K562 (cell line): ENCODE measurements at regions of chr17 and their contacts with region 1.

Region 1: GRCh38 chr17:73657473-73658116 is 13.3 kb upstream of the SDK2 start:
- DNase-seq: peak; percentile 29 to 59 (median 37)
- ATAC-seq: peak; percentile 81
- H3K4me3 ChIP-seq: no peak overlapping the region
- H3K27ac ChIP-seq: no peak overlapping the region
- H3K4me1 ChIP-seq: no peaks in the 10 kb centered on the region
- H3K27me3 ChIP-seq: peaks cover 0 to 11% of the 10 kb centered on the region in 2 experiments; a peak in 2 of 5 replicates
- CTCF ChIP-seq: peak; percentile 48 to 69 (median 63)
- EP300 ChIP-seq: no peak
- POLR2A ChIP-seq: no peak
- RAD21 ChIP-seq: peak in 1 of 2 experiments; percentile 49; a peak in 2 of 4 replicates

Region 2: DNA sequence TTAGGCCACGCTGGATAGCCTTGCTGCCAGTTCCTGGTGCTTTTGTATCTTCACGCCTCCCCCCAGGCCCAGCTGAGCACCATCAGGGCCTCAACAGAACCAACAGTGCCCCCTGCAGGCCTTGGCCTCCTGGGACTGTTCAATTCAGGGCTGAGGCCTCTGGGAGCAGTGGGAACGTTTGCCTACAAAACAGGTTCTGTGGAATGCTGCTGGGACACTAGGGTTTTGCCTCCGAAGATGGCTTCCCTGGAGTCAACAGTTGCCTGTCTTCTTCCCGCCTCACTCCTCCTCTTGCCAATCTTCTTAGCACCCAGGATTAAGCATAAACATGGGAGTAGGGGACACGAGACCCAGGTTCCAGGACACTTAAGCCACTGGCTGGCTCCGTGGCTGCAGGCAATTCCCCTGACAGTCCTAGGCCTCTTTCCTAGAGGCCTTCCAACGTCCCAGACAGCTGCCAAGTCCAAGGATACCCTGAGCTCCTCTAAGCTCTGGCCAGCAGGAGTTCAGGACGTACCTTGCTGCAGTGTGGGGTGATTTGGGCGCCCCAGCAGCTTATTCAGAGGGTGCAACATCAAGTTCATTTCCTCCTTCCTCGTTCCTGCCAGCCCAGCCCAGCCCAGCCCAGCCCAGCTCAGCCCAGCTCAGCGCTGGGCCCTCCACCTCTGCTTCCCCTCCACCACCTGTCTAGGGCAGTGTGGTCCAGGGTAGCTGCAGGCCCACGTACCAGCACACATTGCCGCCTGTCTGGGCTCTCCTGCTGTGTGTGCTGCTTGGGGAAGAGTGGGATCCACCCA is 299.3 kb after region 1 on chr17:
- CTCF ChIA-PET with region 1: no interaction called
- POLR2A ChIA-PET with region 1: no interaction called
- in situ Hi-C with region 1: no loop called
- intact Hi-C with region 1: loop called (anchors 10 kb)
- DNase-seq: peak; percentile 64 to 75 (median 66)
- ATAC-seq: peak; percentile 94
- H3K4me3 ChIP-seq: no peak overlapping the region
- H3K27ac ChIP-seq: no peak overlapping the region
- H3K4me1 ChIP-seq: peaks cover 0 to 11% of the 10 kb centered on the region in 2 experiments; a peak in 1 of 5 replicates
- H3K27me3 ChIP-seq: peaks cover 0 to 6% of the 10 kb centered on the region in 2 experiments; a peak in 2 of 5 replicates
- CTCF ChIP-seq: peak; percentile 69 to 79 (median 71)
- EP300 ChIP-seq: no peak
- POLR2A ChIP-seq: no peak
- RAD21 ChIP-seq: peak; percentile 30 to 72